Left lung (tissue), 14 donors: ENCODE measurements at regions of chr9 and their contacts with region 1.

Region 1: DNA sequence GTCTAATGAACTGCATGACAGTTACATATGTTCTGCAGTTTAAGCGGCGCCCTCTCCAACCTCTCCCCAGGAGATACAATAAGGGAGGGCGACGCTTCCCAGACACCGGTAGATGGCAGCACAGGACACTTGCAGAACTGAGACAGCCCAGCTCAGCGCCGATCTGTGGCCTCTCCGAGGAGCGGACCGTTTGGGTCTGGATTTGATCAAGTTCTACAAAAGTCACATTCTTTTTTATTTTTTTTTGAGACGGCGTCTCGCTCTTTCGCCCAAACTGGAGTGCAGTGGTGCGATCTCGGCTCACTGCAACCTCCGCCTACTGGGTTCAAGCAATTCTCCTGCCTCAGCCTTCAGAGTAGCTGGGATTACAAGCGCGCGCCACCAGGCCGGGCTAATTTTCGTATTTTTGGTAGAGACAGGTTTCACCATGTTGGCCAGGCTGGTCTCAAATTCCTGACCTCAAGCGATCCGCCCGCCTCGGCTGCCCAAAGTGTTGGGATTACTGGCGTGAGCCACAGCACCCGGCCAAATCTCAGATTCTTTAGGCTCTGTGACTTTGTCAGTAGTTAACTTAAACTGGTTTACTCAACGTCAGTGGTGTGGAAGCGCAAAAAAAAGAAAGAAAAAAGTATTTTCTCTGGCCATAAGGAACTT is 1.4 kb upstream of the ATOSB start:
- DNase-seq: peak; percentile 87 to 95 (median 94)
- ATAC-seq: peak; percentile 79
- H3K4me3 ChIP-seq: peak overlapping the region; percentile 55 to 85
- H3K27ac ChIP-seq: peak overlapping the region; percentile 95 to 96
- H3K4me1 ChIP-seq: peaks cover 27 to 46% of the 10 kb centered on the region in 2 donors
- H3K27me3 ChIP-seq: no peaks in the 10 kb centered on the region
- CTCF ChIP-seq: peak; percentile 89 to 92

Region 2: DNA sequence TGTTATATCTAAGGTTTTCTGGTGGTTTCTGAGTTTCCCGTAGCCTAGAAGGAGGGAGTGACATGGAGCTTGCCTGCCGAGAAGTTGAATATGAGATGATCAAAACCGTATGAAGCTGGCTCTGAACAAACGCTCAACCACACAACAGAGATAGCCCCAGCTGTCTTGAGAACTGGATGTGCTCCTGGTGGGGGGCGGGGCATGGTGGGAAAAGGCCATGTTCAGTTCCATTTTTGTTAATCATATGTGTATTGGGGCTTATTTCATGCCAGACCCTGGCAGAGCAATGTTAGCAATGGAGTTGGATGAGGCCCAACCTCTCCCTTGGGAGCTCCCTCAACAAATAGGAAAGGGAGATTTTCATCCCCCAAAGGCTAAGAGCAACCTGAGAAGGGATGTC is 430.8 kb before region 1 on chr9:
- intact Hi-C with region 1: no loop called
- DNase-seq: no peak
- ATAC-seq: no peak
- H3K4me3 ChIP-seq: no peak overlapping the region
- H3K27ac ChIP-seq: no peak overlapping the region
- H3K4me1 ChIP-seq: peaks cover 0 to 8% of the 10 kb centered on the region in 2 donors
- H3K27me3 ChIP-seq: no peaks in the 10 kb centered on the region
- CTCF ChIP-seq: no peak

Region 3: DNA sequence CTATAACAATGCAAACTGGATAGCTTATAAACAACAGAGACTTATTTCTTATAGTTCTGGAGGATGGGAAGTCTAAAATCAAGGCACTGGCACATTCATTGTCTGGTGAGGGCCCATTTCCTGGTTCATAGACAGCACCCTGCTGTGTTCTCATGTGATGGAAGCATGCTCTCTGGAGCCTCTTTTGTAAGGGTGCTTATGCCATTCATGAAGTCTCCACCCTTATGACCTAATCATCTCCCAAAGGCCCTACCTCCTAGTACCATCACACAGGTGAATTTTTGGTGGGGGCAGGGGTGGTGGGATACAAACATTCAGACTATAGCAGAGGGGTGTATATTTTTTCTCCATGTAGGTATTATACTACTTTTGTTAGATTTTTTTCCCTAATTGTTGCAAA is 137.2 kb after region 1 on chr9:
- intact Hi-C with region 1: loop called in 1 of 2 experiments (anchors 5 kb)
- DNase-seq: no peak
- ATAC-seq: peak; percentile 20
- H3K4me3 ChIP-seq: no peak overlapping the region
- H3K27ac ChIP-seq: no peak overlapping the region
- H3K4me1 ChIP-seq: peaks cover 0 to 14% of the 10 kb centered on the region in 2 donors
- H3K27me3 ChIP-seq: no peaks in the 10 kb centered on the region
- CTCF ChIP-seq: no peak

Region 4: GRCh38 chr9:35476596-35476995 is 359.6 kb after region 1 on chr9:
- intact Hi-C with region 1: loop called in 1 of 2 experiments (anchors 5 kb)
- DNase-seq: no peak
- ATAC-seq: peak; percentile 65
- H3K4me3 ChIP-seq: no peak overlapping the region
- H3K27ac ChIP-seq: no peak overlapping the region
- H3K4me1 ChIP-seq: peaks cover 0 to 7% of the 10 kb centered on the region in 2 donors
- H3K27me3 ChIP-seq: peaks cover 0 to 3% of the 10 kb centered on the region in 2 donors
- CTCF ChIP-seq: no peak